ENCODE measurements at regions of chr5 and their contacts with region 1.

Region 1: GRCh38 chr5:170791325-170791954 is 7.9 kb downstream of the GABRP start:
- DNase-seq: peak; percentile 88
- H3K4me3 Mint-ChIP-seq: no peak overlapping the region
- H3K27ac Mint-ChIP-seq: no peak overlapping the region
- H3K4me1 Mint-ChIP-seq: no peaks in the 10 kb centered on the region
- H3K27me3 Mint-ChIP-seq: no peaks in the 10 kb centered on the region
- CTCF ChIP-seq: peak; percentile 94

Region 2: DNA sequence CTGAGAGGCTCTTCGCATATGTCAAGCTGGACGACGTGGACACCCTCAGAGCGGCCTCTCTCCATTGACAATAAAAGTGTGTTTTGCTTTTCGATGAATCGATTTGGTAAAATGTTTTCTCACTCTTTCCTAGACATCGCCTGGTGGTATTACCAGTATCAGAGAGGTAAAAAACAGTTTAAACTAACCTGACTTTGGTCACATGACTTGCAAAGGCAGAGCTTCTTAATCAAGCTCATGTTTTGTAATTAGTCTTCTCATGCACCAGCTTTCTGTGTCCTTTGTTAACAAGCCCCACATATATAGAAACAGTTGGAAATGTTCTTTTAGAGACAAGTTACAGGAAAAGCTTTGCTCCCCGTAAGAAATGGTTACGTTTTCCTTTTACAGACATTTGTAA is 78.7 kb before region 1 on chr5:
- CTCF ChIA-PET with region 1: interaction called, 14 read pairs
- POLR2A ChIA-PET with region 1: no interaction called
- intact Hi-C with region 1: no loop called
- DNase-seq: no peak
- H3K4me3 Mint-ChIP-seq: no peak overlapping the region
- H3K27ac Mint-ChIP-seq: no peak overlapping the region
- H3K4me1 Mint-ChIP-seq: no peaks in the 10 kb centered on the region
- H3K27me3 Mint-ChIP-seq: peaks cover 44% of the 10 kb centered on the region
- CTCF ChIP-seq: no peak

Region 3: GRCh38 chr5:170769246-170769645 is 22.2 kb before region 1 on chr5:
- CTCF ChIA-PET with region 1: interaction called, 29 read pairs
- POLR2A ChIA-PET with region 1: no interaction called
- intact Hi-C with region 1: no loop called
- DNase-seq: no peak
- H3K4me3 Mint-ChIP-seq: no peak overlapping the region
- H3K27ac Mint-ChIP-seq: no peak overlapping the region
- H3K4me1 Mint-ChIP-seq: peaks cover 5% of the 10 kb centered on the region
- H3K27me3 Mint-ChIP-seq: no peaks in the 10 kb centered on the region
- CTCF ChIP-seq: no peak

Region 4: DNA sequence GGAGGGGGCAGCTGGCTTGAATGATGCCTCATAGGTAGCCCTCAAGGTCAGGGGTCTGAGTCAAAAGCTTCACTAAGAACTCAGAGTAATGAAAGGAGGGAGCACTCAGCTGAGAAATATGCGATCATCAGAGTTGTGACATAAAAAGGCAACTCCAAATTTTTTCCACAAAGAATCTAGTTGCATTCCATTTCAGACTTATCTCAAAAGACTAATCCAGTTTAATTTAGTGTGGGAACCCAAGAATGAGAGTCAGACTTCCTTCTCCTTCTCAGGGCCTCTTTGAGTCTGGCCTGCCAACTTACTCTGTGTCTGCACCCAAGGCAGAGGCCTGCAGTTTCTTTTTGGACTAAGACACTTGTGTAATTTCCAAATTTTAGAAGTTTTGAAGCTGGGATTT is 26.8 kb after region 1 on chr5:
- CTCF ChIA-PET with region 1: interaction called, 10 read pairs
- POLR2A ChIA-PET with region 1: no interaction called
- intact Hi-C with region 1: no loop called
- DNase-seq: no peak
- H3K4me3 Mint-ChIP-seq: no peak overlapping the region
- H3K27ac Mint-ChIP-seq: no peak overlapping the region
- H3K4me1 Mint-ChIP-seq: no peaks in the 10 kb centered on the region
- H3K27me3 Mint-ChIP-seq: no peaks in the 10 kb centered on the region
- CTCF ChIP-seq: no peak

Region 5: GRCh38 chr5:171010816-171011215 is 219.4 kb after region 1 on chr5:
- CTCF ChIA-PET with region 1: no interaction called
- POLR2A ChIA-PET with region 1: no interaction called
- intact Hi-C with region 1: no loop called
- DNase-seq: no peak
- H3K4me3 Mint-ChIP-seq: no peak overlapping the region
- H3K27ac Mint-ChIP-seq: no peak overlapping the region
- H3K4me1 Mint-ChIP-seq: no peaks in the 10 kb centered on the region
- H3K27me3 Mint-ChIP-seq: no peaks in the 10 kb centered on the region
- CTCF ChIP-seq: no peak

Region 6: DNA sequence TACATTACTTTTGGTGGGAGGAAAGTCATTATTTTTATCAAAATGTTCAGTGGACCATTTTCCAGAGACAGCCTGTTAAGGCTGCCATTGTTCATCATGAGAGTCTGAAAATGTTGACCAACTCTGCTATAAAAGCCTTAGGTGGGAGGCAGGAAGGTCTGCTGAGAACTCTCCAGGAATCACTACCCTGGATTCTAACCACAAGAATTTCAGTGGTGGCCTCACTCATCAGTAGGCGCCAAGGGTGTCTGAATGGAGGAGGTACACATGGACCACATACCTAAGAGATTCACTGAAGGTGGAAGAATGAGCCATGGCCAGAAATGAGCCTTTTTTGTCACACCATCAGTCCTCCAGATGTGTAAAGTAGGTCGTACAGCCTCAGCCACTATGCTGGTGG is 496.6 kb after region 1 on chr5:
- CTCF ChIA-PET with region 1: no interaction called
- POLR2A ChIA-PET with region 1: no interaction called
- intact Hi-C with region 1: no loop called
- DNase-seq: no peak
- H3K4me3 Mint-ChIP-seq: no peak overlapping the region
- H3K27ac Mint-ChIP-seq: no peak overlapping the region
- H3K4me1 Mint-ChIP-seq: no peaks in the 10 kb centered on the region
- H3K27me3 Mint-ChIP-seq: no peaks in the 10 kb centered on the region
- CTCF ChIP-seq: no peak